ENCODE measurements at regions of chr15 and their contacts with region 1.

Region 1: DNA sequence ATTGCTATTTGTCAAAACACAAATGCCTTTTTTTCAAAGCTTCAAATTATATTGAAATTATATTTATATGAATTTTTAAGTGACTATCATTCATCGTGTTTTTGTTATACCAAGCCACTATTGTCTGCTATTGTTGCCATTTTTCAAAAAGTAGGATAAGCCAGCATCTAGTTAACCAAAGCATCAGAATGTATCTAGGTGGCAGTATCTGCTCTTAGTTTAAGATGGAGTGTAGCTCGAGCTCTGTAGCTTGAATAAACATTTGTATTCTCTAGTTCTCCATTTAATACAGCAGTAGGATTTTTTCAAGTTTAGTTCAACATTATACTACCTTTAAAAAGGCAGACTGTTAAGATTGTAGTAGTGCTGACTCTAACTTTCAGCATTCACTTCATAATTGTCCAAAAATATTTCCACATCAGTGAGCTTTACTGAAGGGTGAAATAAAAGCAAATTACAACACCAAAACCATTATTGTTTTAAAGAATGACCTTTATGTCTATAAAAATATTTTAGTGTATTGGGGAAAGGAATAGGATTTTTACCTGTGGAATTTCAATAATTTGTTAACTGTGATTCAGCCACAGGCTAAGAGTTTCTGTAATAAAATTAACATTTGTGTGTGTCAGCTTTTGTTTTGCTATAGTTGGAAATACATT is 19.6 kb upstream of the C15orf61 start:
- DNase-seq: no peak
- H3K4me3 ChIP-seq: no peak overlapping the region
- CTCF ChIP-seq: peak; percentile 43

Region 2: DNA sequence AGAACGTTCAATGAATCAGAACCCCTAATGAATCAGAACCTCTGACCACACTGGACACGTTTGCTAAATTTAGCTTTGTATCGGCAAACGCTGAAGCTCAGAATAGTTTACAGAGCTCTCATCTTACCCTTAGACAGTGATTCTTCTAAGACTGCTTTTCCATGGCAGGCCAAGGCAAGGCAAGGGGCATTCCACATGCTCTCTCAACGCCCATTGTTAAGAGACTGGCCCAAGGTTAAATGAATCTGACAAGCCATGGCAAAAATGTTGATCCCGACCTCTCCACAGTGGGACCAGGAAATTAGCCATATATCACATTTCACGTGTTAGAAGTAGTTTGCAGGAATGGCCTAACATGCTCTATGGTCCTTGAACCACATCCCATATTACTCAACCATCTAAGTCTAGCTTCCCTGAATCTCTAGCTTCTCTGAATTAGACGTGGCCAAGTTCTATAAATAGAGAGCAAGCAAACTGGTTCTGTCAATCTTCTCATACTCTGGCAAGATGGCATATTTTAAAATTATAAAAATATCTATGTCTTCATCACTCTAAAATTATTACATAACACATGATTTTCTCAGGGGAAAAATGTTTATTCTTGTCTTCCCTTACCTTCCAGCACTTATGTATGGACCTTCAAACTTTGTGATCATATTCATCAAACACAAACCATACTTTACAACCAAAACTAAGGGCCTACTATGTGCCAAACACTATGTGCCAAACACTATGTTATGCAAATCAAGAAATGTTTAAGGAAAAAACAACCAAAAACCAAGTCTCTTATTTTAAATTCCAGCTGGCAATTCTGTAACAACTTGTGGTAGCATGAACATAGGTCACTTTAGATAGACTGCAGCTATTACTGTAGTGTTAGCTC is 301.2 kb before region 1 on chr15:
- CTCF ChIA-PET with region 1: no interaction called
- POLR2A ChIA-PET with region 1: no interaction called
- DNase-seq: no peak
- H3K4me3 ChIP-seq: no peak overlapping the region
- CTCF ChIP-seq: no peak

Region 3: DNA sequence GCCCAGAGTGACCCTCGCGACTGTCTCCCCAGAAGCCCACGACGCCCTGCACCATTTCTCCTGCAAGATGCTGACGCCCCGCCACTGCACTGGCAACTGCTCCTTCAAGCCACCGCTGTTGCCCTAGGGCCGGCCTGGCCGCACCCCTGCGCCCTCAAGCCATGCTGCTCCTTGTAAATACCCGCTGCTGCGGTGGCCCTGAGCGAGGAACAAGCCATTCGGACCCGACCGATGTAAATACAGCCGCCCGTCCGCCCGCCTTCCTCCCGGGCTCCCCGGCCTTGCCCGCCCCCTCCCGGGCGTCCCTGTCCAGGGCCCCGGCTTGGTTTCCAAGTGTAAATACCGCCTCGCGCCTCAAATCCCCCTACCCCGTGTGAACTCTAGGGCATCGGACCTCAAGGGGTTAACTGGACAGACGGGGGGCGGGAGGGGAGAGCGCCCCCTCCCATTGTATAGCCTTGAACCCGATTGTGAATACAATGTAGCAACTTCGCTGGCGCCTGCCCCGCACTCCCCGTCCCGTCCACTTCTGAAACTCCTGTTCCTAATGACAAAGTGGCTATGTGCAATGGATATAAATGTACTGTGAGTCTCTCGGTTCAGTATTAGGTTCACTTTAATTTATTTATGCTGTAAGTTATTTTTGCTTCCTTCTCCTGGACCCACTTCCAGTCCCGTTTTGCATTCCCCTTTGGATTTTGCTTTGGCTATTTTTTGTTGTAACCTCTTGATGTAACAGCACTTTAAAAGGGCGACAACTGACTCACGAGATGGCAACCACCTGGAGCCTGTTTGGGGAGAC is 332.6 kb after region 1 on chr15:
- CTCF ChIA-PET with region 1: interaction called, 57 read pairs
- POLR2A ChIA-PET with region 1: no interaction called
- DNase-seq: no peak
- H3K4me3 ChIP-seq: peak overlapping the region; percentile 36
- CTCF ChIP-seq: peak; percentile 59

Measured in AG04449 (cell line).